ENCODE measurements at regions of chr9 and their contacts with region 1.

Region 1: DNA sequence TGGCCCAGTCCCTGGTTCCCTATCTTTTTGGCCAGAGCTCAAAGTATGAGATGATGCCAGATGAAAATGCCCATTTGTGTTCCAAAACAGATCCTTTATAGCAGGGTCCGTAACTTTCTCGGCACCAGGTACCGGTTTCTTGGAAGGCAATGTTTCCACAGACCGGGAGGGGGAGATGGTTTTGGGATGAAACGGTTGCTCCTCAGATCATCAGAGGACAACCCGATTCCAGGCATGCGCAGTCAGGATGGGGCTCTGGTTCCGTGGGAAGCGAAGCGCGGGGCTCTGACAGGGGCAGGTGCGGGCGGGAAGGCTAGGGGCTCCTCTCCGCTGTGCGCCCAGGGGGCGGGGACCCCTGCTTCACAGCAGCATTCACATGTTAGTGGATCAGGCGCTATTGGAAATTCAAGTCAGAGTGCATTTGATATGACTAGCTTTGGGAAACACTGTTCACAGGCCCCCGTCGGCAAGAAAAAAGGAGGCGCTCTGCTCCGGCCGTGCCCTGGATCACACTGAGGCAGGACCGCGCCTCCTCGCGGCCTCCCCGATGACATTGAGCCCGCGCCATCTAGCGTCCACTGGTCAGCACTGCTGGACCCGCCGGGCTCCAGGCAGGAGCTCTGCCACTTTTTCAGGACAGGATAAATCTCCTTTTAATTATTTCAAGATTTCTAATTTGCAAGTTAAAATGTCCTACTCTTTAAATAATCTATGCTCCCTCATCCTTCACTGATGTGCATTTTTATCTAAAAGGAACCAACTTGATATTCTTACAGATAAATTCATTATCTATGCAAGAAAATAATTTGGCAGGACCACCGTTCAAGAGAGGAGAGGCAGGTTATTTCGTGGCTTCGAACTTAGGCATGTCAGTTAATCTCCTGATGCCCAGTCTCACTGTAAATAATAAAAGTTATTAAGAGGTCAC is 190.0 kb downstream of the FANCC start:
- DNase-seq: peak; percentile 85
- CTCF ChIP-seq: peak; percentile 100

Region 2: DNA sequence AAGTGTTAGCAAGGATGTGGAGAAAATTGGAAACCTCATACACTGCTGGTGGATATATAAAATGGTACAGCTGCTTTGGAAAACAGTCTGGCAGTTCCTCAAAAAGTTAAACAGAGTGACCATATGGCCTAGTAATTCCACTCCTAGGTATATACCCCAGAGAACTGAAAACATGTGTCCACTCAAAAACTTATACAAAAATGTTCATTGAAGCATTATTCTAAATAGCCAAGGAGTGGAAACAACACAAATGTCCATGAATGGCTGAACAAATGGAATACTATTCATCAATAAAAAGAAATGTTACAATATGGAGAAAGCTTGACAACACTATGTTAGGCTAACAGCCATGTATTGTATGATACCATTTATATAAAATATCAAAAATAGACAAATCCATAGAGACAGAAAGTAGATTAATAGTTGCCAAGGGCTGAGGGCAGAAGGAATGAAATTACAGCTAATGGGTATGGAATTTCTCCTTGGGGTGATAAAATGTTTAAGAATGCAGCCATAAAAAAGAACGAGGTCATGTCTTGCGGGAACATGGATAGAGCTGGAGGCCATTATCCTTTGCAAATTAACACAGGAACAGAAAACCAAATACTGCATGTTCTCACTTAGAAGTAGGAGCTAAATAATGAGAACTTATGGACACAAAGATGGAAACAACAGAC is 454.6 kb before region 1 on chr9:
- CTCF ChIA-PET with region 1: interaction called, 282 read pairs
- POLR2A ChIA-PET with region 1: no interaction called
- DNase-seq: no peak
- CTCF ChIP-seq: no peak

Region 3: GRCh38 chr9:94783102-94783664 is 344.3 kb before region 1 on chr9:
- CTCF ChIA-PET with region 1: interaction called, 114 read pairs
- POLR2A ChIA-PET with region 1: no interaction called
- DNase-seq: peak; percentile 44
- CTCF ChIP-seq: peak; percentile 56

Region 4: GRCh38 chr9:95107001-95107749 is 20.3 kb before region 1 on chr9:
- CTCF ChIA-PET with region 1: interaction called, 74 read pairs
- POLR2A ChIA-PET with region 1: no interaction called
- DNase-seq: no peak
- CTCF ChIP-seq: no peak

Region 5: DNA sequence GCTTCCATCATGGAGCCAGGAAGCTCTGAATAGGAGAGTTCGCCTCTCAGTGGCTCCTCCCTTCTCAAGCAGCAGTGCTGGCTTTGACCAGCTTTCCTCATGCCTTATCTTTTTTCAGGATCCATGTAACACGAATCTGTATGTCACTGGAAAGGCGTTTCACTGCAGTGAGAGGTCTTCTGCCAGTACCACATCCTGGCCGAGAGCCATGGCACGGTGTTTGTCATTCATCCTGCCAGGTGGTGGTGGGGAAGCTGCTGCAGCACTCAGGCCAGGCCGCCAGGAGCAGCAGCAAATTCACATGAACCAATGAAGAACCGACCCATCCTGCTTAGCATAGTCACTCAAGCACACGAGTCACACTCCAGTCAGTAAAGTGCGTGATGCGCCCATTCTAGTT is 11.0 kb after region 1 on chr9:
- CTCF ChIA-PET with region 1: interaction called, 37 read pairs
- POLR2A ChIA-PET with region 1: no interaction called
- DNase-seq: no peak
- CTCF ChIP-seq: no peak

Region 6: DNA sequence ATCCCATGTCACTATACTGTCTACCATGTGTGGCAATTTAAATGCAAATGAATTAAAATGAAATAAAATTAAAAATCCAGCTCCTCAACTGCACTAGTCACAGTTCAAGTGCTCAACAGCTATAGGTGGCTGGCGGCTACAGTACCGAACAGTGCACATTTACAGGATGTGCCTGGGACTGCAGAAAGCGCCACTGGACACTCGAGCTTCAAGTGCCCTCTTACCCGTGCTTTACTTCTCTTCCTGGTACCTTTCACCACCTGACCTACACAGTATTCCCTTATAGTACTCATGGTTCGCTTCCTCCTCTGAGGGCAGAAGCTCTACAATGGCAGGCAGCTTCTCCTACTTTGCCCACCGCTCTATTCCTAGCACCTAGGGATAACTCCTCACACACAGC is 23.4 kb after region 1 on chr9:
- CTCF ChIA-PET with region 1: interaction called, 19 read pairs
- POLR2A ChIA-PET with region 1: no interaction called
- DNase-seq: no peak
- CTCF ChIP-seq: no peak

Region 7: GRCh38 chr9:95167998-95168397 is 40.5 kb after region 1 on chr9:
- CTCF ChIA-PET with region 1: interaction called, 13 read pairs
- POLR2A ChIA-PET with region 1: no interaction called
- DNase-seq: no peak
- CTCF ChIP-seq: peak; percentile 51

Region 8: DNA sequence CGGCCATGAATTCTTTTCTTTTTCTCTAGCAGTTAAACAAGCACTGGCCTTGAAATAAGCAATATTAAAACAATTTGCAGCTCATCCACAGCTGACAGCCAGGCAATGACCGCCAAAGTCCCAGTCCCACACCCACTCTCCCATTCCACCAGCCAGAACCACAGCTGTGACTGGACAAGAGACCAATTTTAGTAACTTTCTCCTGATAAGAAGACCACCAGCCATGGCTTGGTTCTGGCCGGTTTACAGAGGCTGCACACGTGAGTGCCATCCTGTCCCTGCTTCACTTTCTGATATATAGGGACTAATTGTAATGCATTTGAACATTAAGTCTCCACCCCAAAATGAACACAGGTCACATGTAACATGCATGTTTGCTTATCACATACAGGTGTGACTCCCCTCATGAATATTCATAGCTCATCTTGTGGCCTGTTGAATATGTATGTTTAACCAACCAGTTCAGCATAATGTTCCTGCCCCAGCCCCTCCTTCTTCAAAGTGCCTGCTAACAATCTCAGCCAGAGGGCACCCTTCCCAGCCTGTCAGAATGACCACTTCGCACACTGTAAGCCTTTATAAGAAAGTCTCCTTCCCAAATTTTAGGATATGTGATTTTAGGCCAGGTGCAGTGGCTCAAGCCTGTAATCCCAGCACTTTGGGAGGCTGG is 213.9 kb after region 1 on chr9:
- CTCF ChIA-PET with region 1: no interaction called
- POLR2A ChIA-PET with region 1: no interaction called
- DNase-seq: no peak
- CTCF ChIP-seq: peak; percentile 9

Measured in GM10248 (cell line).